IMR-90 (cell line): ENCODE measurements at regions of chr6 and their contacts with region 1.

Region 1: DNA sequence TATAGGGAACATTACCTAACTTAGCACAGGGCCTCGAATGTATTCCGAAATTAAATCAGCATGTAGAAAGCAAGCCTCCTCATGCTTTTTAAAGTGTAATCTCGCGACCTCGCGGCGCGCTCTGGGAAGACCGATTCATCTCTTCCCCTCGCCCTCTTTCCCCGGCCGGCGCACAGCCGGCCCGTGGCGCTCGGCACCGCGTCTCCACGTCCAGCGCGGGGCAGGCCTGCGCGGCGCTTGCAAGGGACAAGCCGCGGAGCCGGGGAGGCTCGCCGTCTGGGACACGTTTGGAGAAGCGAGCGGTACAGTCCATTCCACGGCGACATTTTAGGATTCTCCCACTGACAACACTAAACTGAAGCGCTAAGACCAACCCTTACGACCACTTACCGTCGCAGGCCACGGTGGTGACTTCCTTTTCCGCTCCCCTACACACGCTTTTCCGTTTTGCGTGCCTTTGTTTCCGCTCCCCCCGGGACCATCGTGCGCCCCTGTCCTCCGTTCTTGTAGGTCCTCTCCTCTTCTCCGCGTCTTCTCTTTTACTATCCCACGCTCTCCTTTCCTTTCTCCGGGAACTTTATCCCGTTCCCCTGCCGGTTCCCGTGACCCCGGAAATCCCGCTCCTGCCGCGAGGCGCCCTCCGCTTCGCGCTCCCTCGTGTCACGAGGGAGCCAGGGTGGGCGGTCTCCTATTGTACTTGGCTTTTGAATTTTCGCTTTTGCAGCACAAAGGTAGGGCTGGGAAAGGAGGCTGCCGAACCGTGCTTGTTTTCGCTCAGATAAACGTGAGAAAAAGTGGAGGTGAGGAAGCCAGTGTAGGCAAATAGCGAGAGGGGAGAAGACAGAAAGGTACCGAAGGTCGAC is at the start of gene ECHDC1:
- DNase-seq: peak; percentile 66
- ATAC-seq: peak; percentile 62
- H3K4me3 ChIP-seq: peak within 1 kb of the TSS; percentile 65
- H3K27ac ChIP-seq: peak within 1 kb of the TSS; percentile 91
- H3K4me1 ChIP-seq: peaks cover 8% of the 10 kb centered on the region
- H3K27me3 ChIP-seq: no peaks in the 10 kb centered on the region
- CTCF ChIP-seq: 0 out of 2 replicates have a peak, but pooled peaks have one; percentile 4
- POLR2A ChIP-seq: peak; percentile 55; the same call in 1 of the 2 replicates
- RAD21 ChIP-seq: no peak
- total RNA-seq, gene ECHDC1: 40.3 and 114 TPM in 2 replicates

Region 2: GRCh38 chr6:127302728-127303660 is 40.2 kb before region 1 on chr6:
- CTCF ChIA-PET with region 1: no interaction called
- POLR2A ChIA-PET with region 1: no interaction called
- dilution Hi-C with region 1: no loop called
- in situ Hi-C with region 1: no loop called
- intact Hi-C with region 1: loop called (anchors 2 kb)
- DNase-seq: peak; percentile 48
- ATAC-seq: peak; percentile 34; the same call in 1 of the 2 replicates
- H3K4me3 ChIP-seq: no peak overlapping the region
- H3K27ac ChIP-seq: no peak overlapping the region
- H3K4me1 ChIP-seq: no peaks in the 10 kb centered on the region; the same call in none of the 2 replicates
- H3K27me3 ChIP-seq: no peaks in the 10 kb centered on the region
- CTCF ChIP-seq: peak; percentile 81
- POLR2A ChIP-seq: no peak
- RAD21 ChIP-seq: peak; percentile 69

Region 3: DNA sequence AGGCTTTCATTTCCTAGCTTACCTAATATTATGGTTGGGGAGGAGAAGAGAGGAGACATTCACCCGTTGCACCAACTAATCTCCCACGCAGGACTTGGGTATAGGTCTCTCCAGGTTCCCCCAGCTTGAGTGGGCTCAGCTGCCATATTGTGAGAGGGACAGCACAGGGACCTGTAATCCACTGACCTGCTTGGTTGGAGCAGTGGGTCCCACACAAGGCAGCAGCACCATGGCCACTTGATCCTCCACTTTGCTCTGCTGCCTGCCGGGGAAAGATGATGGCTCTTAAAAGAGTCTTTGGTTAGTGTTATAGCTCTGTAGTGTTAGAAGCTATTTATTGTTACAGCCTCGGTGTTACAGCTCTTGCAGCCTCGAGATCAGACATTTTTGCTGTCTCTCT is 22.7 kb after region 1 on chr6:
- CTCF ChIA-PET with region 1: interaction called, 3 read pairs
- POLR2A ChIA-PET with region 1: no interaction called
- dilution Hi-C with region 1: no loop called
- in situ Hi-C with region 1: no loop called
- intact Hi-C with region 1: loop called (anchors 1 kb)
- DNase-seq: no peak
- ATAC-seq: peak; percentile 21
- H3K4me3 ChIP-seq: no peak overlapping the region
- H3K27ac ChIP-seq: peak overlapping the region; percentile 80
- H3K4me1 ChIP-seq: peaks cover 5% of the 10 kb centered on the region
- H3K27me3 ChIP-seq: no peaks in the 10 kb centered on the region
- CTCF ChIP-seq: no peak
- POLR2A ChIP-seq: no peak
- RAD21 ChIP-seq: no peak

Region 4: DNA sequence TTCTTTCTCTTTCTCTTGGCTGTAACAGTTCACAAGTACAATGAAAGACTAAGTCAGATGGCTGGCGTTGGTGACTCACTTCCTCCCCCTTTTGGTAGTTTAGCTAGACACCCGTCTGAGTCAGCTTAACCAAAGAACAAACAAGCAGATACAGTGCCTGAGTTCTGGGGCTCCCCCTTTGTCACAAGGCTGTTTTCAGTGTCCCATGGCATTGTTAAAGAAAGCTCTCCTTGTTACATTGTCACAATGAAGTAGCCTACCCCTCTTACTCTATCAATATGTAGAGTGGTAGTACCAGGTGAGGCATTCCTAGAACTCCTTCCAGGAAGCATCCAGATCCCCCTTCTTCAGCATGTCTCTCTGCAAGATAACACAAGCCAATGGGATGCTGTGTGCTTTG is 77.4 kb after region 1 on chr6:
- CTCF ChIA-PET with region 1: no interaction called
- POLR2A ChIA-PET with region 1: no interaction called
- dilution Hi-C with region 1: no loop called
- in situ Hi-C with region 1: no loop called
- intact Hi-C with region 1: loop called (anchors 1 kb)
- DNase-seq: peak; percentile 97
- ATAC-seq: peak; percentile 98
- H3K4me3 ChIP-seq: no peak overlapping the region
- H3K27ac ChIP-seq: no peak overlapping the region
- H3K4me1 ChIP-seq: peaks cover 3% of the 10 kb centered on the region; the same call in 1 of the 2 replicates
- H3K27me3 ChIP-seq: no peaks in the 10 kb centered on the region
- CTCF ChIP-seq: peak; percentile 55
- POLR2A ChIP-seq: no peak
- RAD21 ChIP-seq: peak; percentile 53

Region 5: GRCh38 chr6:127464881-127465459 is 121.8 kb after region 1 on chr6:
- CTCF ChIA-PET with region 1: no interaction called
- POLR2A ChIA-PET with region 1: no interaction called
- dilution Hi-C with region 1: no loop called
- in situ Hi-C with region 1: no loop called
- intact Hi-C with region 1: loop called (anchors 1 kb)
- DNase-seq: peak; percentile 78
- ATAC-seq: peak; percentile 88
- H3K4me3 ChIP-seq: no peak overlapping the region
- H3K27ac ChIP-seq: no peak overlapping the region
- H3K4me1 ChIP-seq: peaks cover 4% of the 10 kb centered on the region; the same call in 1 of the 2 replicates
- H3K27me3 ChIP-seq: no peaks in the 10 kb centered on the region
- CTCF ChIP-seq: peak; percentile 88
- POLR2A ChIP-seq: no peak
- RAD21 ChIP-seq: peak; percentile 79